ENCODE measurements at regions of chr4 and their contacts with region 1.

Region 1: DNA sequence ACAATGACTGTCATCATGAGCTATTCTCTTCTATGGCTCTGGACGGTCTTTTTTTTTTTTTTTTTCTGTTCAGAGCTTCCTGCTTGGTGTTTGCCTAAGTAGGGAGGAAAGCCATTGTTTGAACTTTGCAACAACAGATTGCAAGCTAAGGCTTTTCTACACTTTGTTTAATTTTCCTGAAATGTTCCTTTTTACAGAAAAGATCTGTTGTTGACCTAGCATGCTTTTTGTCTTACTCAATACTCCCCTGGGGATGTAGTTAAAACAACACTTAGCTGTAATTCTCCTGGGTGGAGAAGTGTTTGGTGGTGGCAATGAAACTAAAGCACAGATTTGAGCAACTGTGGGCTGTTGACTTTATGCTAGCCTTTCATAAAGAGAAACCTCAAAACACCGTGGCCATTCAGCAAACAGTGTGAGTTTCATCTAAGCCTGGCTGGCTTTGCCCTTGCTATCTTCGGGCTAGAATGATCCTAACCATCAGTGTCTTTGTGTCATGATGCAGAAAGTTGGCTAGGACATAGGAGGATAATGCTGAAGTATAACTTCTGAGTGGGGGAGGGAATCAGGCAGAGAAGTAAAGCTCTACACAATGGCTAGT is 110.5 kb downstream of the ANXA3 start:
- DNase-seq: peak in 1 of 2 experiments; percentile 71
- ATAC-seq: peak; percentile 87 to 92
- H3K4me3 ChIP-seq: no peak overlapping the region
- H3K27ac ChIP-seq: peak overlapping the region; percentile 73 to 79
- H3K4me1 ChIP-seq: peaks cover 34% of the 10 kb centered on the region
- CTCF ChIP-seq: no peak
- EP300 ChIP-seq: peak in 1 of 2 experiments; percentile 62; a peak in 3 of 5 replicates
- POLR2A ChIP-seq: no peak
- RAD21 ChIP-seq: peak in 1 of 2 experiments; percentile 39; a peak in 1 of 5 replicates

Region 2: GRCh38 chr4:78775303-78776030 is 113.4 kb after region 1 on chr4:
- CTCF ChIA-PET with region 1: no interaction called
- POLR2A ChIA-PET with region 1: interaction called, 12 read pairs
- DNase-seq: peak; percentile 51 to 78
- ATAC-seq: peak; percentile 83
- H3K4me3 ChIP-seq: peak overlapping the region; percentile 64
- H3K27ac ChIP-seq: peak overlapping the region; percentile 96 to 97
- H3K4me1 ChIP-seq: peaks cover 18% of the 10 kb centered on the region; the same call in 2 of the 3 replicates
- CTCF ChIP-seq: no peak
- EP300 ChIP-seq: no peak
- POLR2A ChIP-seq: peak; percentile 38
- RAD21 ChIP-seq: no peak

Measured in A549 (cell line).